Cardiac septum (tissue), 1 donor: ENCODE measurements at regions of chr6 and their contacts with region 1.

Region 1: GRCh38 chr6:2988426-2989331 is 11.0 kb upstream of the NQO2 start:
- DNase-seq: peak; percentile 95

Region 2: DNA sequence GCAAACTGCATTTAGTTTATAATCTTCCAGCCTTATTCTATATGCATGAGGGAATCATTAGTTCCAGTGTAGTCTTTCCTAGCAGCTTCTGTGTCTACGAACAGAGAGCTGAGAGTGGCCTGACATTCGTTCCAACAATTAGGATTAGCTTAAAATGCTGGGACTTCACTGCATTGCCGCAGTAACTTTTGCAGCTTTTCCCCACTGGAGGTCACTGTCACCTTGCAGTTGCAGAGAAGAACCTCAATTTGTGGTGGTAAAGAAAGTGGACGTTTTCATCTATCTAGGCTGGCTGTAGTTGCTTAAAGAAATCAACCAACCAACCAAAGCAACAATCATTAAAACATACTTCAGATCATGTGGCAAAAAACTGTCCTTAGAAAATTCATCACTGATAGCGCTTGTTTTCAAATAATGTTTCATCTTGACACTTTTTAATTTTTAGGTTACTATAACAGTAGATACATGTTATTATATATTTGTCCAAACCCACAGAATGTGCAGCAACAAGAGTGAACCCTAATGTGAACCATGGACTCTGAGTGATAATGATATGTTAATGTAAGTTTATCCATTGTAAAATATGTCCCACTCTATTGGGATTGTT is 250.2 kb before region 1 on chr6:
- intact Hi-C with region 1: no loop called
- DNase-seq: no peak

Region 3: DNA sequence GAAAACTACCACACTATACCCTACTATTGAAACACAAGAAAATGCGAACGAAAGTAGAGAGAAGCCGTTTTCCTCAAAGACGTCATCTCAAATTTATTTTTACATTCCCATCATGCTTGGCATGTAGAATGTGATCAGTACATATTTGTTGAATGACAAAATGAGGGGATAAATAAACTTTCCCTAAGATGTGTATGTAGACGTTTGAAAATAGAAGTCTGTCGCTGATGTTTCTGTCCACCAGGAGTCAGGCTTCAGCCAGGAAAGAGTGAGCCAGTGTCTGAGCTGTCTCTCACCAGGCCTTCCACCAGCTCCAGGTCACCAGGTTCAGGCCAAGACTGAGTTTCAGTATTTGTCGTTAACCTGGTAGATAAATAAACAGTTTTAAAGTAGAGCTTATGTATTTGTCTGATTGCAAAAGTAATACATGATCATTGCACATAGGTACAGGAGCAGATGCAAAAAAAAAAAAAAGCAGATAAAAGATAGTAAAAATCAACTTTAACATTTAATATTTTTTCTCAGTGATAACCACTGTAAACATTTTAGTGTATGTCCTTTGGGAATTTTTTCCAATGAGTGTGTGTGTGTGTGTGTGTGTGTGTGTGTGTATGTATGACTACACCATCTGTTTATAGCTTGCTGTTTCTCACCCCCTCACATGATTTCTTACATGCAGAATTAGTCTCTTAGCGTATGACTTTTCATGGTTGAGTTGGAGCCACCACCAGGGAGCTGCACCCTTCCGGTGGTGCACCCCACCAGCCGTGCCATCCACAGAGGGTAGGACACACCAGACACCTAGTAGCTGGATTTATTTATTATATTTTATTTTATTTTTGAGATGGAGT is 197.3 kb before region 1 on chr6:
- intact Hi-C with region 1: loop called (anchors 2 kb)
- DNase-seq: peak; percentile 87

Region 4: DNA sequence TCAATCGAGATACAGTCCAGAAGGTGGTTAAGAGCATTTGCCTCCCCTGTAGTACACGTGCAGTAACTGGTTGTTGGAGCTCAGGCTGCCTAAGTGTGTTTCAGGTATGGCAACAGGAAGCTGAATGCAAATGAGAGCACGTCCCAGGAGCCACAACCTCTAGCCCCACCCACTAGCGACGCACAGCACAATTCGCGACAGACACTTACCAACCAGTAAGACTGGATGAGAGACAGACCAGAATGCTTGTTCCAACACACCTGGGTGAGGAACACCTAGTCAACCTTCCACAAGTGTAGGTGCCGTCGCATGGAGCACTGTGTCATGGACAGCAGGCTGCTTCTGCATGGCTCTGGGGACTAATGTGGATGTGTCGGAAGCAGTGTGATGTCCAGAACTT is 139.8 kb before region 1 on chr6:
- intact Hi-C with region 1: loop called (anchors 2 kb)
- DNase-seq: no peak

Region 5: DNA sequence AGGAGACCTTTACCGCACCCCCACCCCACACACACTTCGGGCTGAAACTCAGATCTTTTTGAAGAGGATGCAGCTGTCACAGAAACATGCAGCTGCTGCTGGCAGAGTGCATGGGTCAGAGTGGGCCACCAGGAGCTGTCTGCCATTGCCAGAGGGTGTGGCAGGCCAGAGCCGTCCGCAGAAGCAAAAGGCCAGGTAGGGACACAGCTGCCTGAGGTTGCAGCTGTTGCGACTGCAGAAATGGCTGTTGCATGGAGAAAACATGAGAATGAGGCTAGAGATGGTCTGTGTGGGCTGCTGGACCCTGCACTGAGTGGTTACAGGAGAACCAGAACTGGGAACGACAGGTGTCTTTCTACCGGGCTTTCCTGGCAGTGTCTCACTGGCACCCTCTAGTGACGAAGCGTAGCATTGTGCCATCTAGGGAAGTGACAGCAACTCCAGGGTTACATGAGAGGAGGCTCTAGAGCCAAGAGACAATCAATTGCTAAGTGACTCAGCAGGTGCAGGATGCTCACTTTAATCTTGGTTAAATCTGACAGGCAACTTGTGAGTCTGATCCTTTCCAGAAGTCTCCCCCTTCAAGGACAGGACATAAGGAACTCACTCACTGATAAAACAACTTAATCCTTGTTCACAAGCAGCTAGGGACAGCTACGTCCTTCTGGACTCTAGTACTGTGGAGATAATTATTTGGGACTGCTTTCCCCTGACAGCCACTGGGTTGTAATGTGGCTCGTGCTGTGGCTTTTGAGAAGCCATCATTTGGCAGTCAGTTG is 56.5 kb before region 1 on chr6:
- intact Hi-C with region 1: loop called (anchors 5 kb)
- DNase-seq: peak; percentile 90

Region 6: DNA sequence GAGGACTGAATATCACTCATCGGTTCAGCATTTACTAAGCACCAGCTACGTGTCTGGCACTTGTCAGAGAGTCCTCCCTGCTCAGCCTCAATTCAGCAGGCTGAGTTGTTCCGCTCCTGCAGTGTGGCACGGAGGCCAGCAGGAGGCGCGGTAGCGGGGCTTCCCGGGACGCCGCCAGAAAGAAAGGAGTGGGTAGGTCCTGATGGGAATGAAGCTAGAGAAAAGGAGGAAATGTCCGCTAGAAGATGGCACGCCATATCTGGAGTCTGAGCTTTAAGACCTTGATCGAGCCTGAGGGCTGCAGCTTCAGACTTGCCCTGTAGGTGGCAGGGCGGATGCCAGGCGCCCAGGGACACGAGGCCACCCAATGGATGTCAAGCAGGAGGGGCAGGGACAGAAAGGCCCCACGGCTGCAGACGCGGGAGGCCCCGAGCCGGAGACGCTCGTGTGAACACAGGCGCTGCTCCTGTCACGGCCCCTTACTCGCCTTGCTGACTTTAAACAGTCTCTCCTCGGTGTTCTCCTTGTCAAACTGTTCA is 36.1 kb before region 1 on chr6:
- intact Hi-C with region 1: loop called (anchors 1 kb)
- DNase-seq: no peak

Region 7: GRCh38 chr6:2971420-2972218 is 17.1 kb before region 1 on chr6 and contains the start of gene SERPINB6:
- intact Hi-C with region 1: loop called (anchors 1 kb)
- DNase-seq: peak; percentile 91
- total RNA-seq, gene SERPINB6: 171 TPM